Endothelial cell of umbilical vein (primary cell): ENCODE measurements at regions of chr19 and their contacts with region 1.

Region 1: DNA sequence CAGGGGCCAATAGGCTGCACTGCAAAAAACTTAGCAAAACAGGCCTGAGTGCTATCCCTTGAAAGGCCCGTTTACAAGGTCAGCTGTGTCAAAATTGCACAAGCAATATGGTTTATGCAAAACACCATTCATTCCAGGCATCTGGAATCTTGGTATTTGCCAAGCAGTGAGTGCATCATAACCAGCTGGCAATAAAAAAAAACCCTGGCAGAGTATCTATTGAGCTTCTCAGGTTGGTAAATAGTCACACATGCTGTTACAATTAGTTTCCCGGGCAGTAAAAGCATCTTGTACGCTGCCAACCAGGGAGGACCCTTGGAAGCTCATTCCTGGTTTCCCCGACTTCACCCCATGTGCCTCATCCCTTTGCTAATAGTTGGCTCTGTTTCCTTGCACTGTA is 21.3 kb downstream of the ZNF77 start:
- DNase-seq: no peak
- H3K4me3 ChIP-seq: no peak overlapping the region
- H3K27ac ChIP-seq: no peak overlapping the region
- H3K4me1 ChIP-seq: no peaks in the 10 kb centered on the region
- H3K27me3 ChIP-seq: no peaks in the 10 kb centered on the region
- CTCF ChIP-seq: no peak
- POLR2A ChIP-seq: no peak

Region 2: GRCh38 chr19:2887391-2887914 is 36.1 kb before region 1 on chr19:
- CTCF ChIA-PET with region 1: interaction called, 13 read pairs
- POLR2A ChIA-PET with region 1: no interaction called
- dilution Hi-C with region 1: no loop called
- intact Hi-C with region 1: no loop called
- DNase-seq: peak; percentile 85
- H3K4me3 ChIP-seq: no peak overlapping the region
- H3K27ac ChIP-seq: no peak overlapping the region
- H3K4me1 ChIP-seq: peaks cover 3% of the 10 kb centered on the region
- H3K27me3 ChIP-seq: no peaks in the 10 kb centered on the region
- CTCF ChIP-seq: peak; percentile 58 to 60
- POLR2A ChIP-seq: no peak

Region 3: GRCh38 chr19:2983351-2984195 is 60.1 kb after region 1 on chr19:
- CTCF ChIA-PET with region 1: no interaction called
- POLR2A ChIA-PET with region 1: no interaction called
- dilution Hi-C with region 1: no loop called
- intact Hi-C with region 1: no loop called
- DNase-seq: peak; percentile 64
- H3K4me3 ChIP-seq: peak overlapping the region in 2 of 3 experiments; percentile 13 to 14
- H3K27ac ChIP-seq: peak overlapping the region; percentile 70
- H3K4me1 ChIP-seq: peaks cover 19% of the 10 kb centered on the region
- H3K27me3 ChIP-seq: no peaks in the 10 kb centered on the region
- CTCF ChIP-seq: no peak
- POLR2A ChIP-seq: peak; percentile 33